Posterior cingulate gyrus (tissue), 11 donors: ENCODE measurements at regions of chr19 and their contacts with region 1.

Region 1: GRCh38 chr19:47436712-47437401 is 17.5 kb upstream of the MEIS3 start:
- DNase-seq: peak; percentile 52 to 97 (median 82)

Region 2: GRCh38 chr19:47089767-47090350 is 347.0 kb before region 1 on chr19:
- intact Hi-C with region 1: no loop called
- DNase-seq: peak in 3 of 10 donors; percentile 7 to 28 (median 22)

Region 3: DNA sequence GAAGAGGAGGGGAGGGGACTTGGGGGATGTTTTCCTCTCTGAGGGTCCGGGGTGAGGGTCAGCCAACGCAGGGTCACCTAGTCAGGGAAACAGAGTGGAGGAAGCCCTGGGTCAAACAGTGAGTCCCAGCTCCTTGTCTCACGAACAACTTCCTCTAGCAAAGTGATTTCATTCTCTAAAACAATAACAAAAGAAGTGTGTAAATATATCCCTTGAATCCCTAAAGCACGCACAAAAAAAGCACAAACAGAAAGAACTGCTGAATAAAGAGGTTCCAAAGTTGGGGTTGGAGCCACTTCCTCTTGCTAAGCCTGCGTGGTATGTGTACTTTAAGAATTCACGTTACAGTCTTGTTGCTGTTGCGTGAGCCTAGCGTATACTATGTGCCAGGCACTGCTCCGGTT is 106.4 kb before region 1 on chr19:
- intact Hi-C with region 1: no loop called
- DNase-seq: no peak

Region 4: GRCh38 chr19:47381653-47382279 is 55.1 kb before region 1 on chr19:
- intact Hi-C with region 1: no loop called
- DNase-seq: no peak

Region 5: DNA sequence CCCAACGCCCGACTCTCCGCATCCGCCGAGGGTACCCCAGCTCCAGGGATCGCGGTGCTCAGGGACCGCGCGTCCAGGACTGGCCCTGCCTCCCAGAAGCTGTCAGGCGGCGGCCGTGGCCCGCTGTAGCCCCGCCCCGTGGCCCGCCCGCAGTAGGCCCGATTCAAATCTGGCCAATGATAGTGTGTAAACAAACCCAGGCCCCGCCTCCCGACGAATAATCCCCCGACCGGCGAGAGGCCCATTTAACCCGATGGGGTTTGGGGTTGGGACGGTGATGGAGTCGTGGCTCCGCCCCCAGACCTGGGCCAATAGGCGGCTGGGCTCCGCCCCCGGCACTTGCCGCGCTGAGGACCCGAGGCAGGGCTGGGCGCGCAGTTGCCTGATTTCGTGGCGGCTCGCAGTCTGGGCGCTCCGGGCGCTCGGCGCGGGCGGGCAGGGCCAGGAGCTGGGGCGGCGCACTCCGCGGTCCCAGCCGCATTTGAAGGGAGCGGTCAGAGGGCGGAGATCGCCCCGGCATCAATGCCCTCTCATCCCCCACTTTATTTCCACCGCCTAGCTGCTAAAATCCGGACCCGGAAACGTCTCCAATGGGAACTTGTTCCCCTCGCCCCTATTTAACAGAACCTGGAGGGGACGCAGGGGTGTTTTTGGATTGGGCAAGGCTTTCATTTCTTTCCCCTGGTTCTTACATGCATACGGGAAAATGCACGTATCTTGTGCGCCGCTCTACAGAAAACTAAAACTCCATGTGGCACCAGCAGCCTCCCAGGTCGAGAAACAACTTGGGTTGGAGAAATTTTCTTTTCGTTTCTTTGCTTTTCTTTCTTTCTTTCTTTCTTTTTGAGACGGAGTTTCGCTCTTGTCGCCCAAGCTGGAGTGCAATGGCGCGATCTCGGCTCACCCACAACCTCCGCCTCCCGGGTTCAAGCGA is 163.7 kb after region 1 on chr19:
- intact Hi-C with region 1: loop called (anchors 10 kb)
- DNase-seq: peak; percentile 98 to 100 (median 99)

Region 6: DNA sequence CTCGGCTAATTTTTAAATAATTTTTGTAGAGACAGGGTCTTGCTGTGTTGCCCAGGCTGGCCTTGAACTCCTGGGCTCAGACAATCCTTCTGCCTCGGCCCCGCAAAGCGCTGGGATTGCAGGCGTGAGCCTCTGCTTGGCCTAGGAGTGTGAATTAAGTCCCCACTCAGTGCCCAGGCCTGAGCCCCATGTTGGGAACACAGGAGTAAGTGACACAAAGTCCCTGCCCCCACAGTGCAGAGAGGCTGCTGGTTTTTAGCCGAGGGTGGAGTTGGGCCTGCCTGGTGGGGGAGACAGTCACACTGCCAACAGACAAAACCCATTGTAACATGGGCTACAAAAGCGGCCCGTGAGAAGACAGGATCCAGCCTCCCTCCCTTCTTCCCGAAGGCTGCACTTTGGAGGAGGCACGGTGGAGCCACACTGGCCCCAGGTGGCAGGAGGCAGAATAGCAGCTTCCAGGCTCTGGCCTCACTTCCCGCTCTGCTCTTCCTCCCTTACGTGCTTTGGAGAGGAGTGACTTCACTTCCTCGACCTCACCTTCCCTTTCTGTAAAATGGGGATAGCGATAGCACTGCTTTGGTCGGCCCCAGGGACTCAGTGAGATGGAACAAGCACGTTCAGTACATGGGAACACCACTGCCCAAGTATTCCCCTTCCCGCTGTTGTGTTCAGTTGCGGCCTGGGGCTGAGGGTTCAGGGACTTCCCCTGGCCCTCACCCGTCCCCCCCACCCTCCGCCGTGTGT is 261.2 kb after region 1 on chr19:
- intact Hi-C with region 1: loop called (anchors 2 kb)
- DNase-seq: peak; percentile 74 to 97 (median 83)